Activated T-helper 1 cell treated with anti-CD3 and anti-CD28 coated beads, Interleukin-12 subunit alpha, Interleukin-12 subunit beta, Interleukin-2, Interleukin-4 antibody, amounts not matched to agents 30 ng/mL and 10 ng/mL and 1 ng/mL, durations not matched to agents 14 hours and 24 hours and 36 hours (primary cell): ENCODE measurements at regions of chr16 and their contacts with region 1.

Region 1: GRCh38 chr16:2155091-2156021 is at the start of gene TRAF7:
- DNase-seq: peak; percentile 98
- H3K4me3 Mint-ChIP-seq: peak within 1 kb of the TSS; percentile 99
- H3K27ac Mint-ChIP-seq: peak within 1 kb of the TSS; percentile 93
- H3K4me1 Mint-ChIP-seq: peaks cover 24% of the 10 kb centered on the region
- H3K27me3 Mint-ChIP-seq: no peaks in the 10 kb centered on the region
- total RNA-seq, gene TRAF7: 70.4 and 73.1 TPM in 2 replicates

Region 2: DNA sequence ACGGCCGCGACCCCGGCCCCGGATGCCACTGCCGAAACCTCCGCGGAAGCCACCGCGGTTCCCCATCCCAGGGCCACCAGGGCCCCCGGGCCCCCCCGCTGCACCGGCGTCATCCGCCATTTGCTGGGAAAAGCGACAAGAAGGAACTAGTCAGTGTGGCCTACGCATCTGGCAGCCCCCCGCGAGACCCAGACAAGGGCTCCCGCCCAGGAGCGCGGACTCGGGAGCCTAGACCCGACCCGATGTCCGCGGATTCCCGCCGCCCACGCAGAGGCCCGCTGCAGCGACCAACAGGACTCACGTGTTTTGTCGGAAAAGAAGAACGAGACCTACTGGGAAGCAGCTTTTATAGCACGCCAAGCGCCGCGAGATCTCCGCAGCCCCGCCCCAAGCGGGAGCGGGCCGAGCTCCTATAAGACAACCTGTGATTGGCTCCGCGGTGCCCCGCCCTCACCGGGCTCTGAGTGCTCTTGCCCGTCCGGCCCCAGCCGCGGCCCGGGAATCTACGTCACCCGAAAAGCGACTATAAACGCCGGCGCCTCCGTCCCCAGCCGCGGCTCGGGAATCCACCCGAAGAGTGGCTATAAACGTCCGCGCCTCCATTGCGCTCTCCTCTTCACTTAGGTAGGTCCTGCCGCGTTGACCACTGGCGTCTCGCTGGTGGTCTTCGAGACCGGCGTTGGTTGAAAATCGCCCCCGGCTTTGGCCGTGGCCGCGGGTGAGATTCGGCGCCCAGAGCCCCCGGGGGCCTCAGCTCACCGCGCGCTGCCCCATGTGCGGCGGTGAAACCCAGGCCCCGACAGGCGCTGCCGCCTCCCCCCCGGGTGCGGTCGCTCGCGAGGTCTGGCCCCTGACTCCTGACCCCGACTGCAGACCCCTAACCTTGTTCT is 190.6 kb before region 1 on chr16 and contains the start of gene RPS2:
- intact Hi-C with region 1: loop called (anchors 1 kb)
- DNase-seq: peak; percentile 99
- H3K4me3 Mint-ChIP-seq: peak within 1 kb of the TSS; percentile 100
- H3K27ac Mint-ChIP-seq: peak within 1 kb of the TSS; percentile 97
- H3K4me1 Mint-ChIP-seq: peaks cover 34% of the 10 kb centered on the region
- H3K27me3 Mint-ChIP-seq: no peaks in the 10 kb centered on the region
- total RNA-seq, gene RPS2: 3,144 and 3,145 TPM in 2 replicates

Region 3: GRCh38 chr16:2023098-2023925 is 132.0 kb before region 1 on chr16:
- intact Hi-C with region 1: loop called (anchors 1 kb)
- DNase-seq: peak; percentile 92
- H3K4me3 Mint-ChIP-seq: peak overlapping the region; percentile 77
- H3K27ac Mint-ChIP-seq: no peak overlapping the region
- H3K4me1 Mint-ChIP-seq: peaks cover 16% of the 10 kb centered on the region
- H3K27me3 Mint-ChIP-seq: peaks cover 37% of the 10 kb centered on the region

Region 4: DNA sequence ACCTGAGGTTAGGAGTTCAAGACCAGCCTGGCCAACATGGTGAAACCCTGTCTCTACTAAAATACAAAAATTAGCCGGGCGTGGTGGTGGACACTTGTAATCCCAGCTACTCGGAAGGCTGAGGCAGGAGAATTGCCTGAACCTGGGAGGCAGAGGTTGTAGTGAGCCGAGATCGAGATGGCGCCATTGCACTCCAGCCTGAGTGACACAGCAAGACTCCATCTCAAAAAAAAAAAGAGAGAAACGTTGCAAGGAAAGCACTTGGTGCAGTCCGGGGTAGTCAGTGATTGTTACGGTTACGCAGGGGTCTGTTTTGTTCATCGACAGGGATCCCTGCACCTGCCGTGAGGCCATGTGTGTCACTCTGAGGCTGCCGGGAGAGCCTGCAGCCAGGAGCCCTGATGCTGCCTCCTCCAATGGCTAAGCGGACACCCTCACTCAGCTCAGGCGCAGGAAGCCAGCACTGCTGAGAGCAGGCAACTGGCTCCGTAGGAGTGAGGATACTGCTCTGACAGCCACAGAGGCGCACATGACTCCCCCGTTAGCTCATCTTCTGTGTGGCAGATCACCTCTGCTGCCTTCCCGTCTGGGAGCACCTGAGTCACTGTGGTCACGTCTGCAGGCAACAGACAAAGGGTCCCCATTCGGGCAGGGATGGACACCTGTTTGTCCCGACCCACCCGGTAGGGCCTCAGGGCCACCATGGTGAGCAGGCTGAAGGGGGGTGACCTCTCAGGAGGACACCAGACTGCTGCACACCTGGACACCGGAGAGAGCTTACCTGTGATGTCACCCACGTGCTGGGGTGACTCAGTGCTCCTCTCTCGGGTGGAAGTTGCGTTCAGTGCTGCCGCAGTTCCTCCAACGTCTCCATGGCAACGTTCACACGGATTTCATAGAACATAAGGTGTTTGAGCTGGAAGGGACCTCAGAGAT is 12.1 kb before region 1 on chr16:
- intact Hi-C with region 1: loop called (anchors 1 kb)
- DNase-seq: no peak
- H3K4me3 Mint-ChIP-seq: no peak overlapping the region
- H3K27ac Mint-ChIP-seq: no peak overlapping the region
- H3K4me1 Mint-ChIP-seq: peaks cover 10% of the 10 kb centered on the region
- H3K27me3 Mint-ChIP-seq: peaks cover 15% of the 10 kb centered on the region

Region 5: GRCh38 chr16:2166757-2167638 is 11.6 kb after region 1 on chr16:
- intact Hi-C with region 1: no loop called
- DNase-seq: no peak
- H3K4me3 Mint-ChIP-seq: no peak overlapping the region
- H3K27ac Mint-ChIP-seq: peak overlapping the region; percentile 23
- H3K4me1 Mint-ChIP-seq: no peaks in the 10 kb centered on the region
- H3K27me3 Mint-ChIP-seq: no peaks in the 10 kb centered on the region

Region 6: GRCh38 chr16:2178321-2179106 is 23.2 kb after region 1 on chr16:
- intact Hi-C with region 1: no loop called
- DNase-seq: no peak
- H3K4me3 Mint-ChIP-seq: no peak overlapping the region
- H3K27ac Mint-ChIP-seq: no peak overlapping the region
- H3K4me1 Mint-ChIP-seq: no peaks in the 10 kb centered on the region
- H3K27me3 Mint-ChIP-seq: no peaks in the 10 kb centered on the region

Region 7: DNA sequence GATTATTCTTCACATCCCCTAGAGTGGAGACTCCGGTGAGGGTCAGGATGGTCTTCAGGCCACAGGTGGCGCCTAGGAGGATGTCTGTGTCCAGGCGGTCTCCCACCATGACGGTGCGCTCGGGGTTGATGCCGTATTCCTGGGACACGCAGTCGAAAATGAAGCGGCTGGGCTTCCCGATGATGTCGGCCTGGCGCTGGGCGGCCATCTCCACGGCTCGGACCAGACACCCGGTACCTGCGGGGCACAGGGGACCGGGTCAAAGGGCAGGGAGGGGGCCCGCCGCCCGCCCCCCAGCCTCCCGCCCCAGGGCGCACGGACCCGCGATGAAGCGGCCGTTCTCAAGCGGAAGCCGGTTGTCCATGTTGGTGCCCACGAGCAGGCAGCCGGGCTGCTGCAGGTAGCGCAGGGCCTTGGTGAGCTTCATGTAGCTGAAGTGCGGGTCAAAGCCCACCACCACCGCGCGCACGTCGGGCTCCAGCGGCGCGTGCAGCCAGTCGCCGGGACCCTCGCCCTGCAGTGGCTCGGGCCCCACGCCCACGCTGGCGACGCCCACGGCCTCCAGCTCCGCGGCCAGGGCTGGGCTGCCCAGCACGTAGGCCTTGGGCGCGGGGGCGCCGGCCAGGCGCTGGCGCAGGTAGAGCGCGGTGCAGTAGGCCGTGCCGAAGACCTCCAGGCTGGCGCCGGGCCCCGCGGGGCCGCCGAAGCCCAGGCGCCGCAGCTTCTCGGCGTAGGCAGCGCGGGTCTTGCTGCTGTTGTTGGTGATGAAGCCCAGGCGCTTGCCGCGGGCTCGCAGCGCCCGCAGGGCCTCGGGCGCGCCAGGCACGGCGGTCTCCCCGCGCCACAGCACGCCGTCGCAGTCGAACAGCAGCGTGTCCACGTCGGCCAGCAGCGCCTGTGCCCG is 58.7 kb after region 1 on chr16:
- intact Hi-C with region 1: loop called (anchors 1 kb)
- DNase-seq: no peak
- H3K4me3 Mint-ChIP-seq: peak overlapping the region; percentile 87
- H3K27ac Mint-ChIP-seq: peak overlapping the region; percentile 65
- H3K4me1 Mint-ChIP-seq: peaks cover 18% of the 10 kb centered on the region
- H3K27me3 Mint-ChIP-seq: no peaks in the 10 kb centered on the region

Region 8: GRCh38 chr16:2251483-2252240 is 96.3 kb after region 1 on chr16 and contains the start of gene ECI1:
- intact Hi-C with region 1: loop called (anchors 1 kb)
- DNase-seq: peak; percentile 80
- H3K4me3 Mint-ChIP-seq: peak within 1 kb of the TSS; percentile 91
- H3K27ac Mint-ChIP-seq: peak within 1 kb of the TSS; percentile 94
- H3K4me1 Mint-ChIP-seq: peaks cover 10% of the 10 kb centered on the region
- H3K27me3 Mint-ChIP-seq: no peaks in the 10 kb centered on the region
- total RNA-seq, gene ECI1: 35.5 and 36.5 TPM in 2 replicates

Region 9: GRCh38 chr16:2429034-2429770 is 273.8 kb after region 1 on chr16 and contains the start of gene CCNF:
- intact Hi-C with region 1: loop called (anchors 1 kb)
- DNase-seq: peak; percentile 95
- H3K4me3 Mint-ChIP-seq: peak within 1 kb of the TSS; percentile 99
- H3K27ac Mint-ChIP-seq: peak within 1 kb of the TSS; percentile 88
- H3K4me1 Mint-ChIP-seq: peaks cover 27% of the 10 kb centered on the region
- H3K27me3 Mint-ChIP-seq: no peaks in the 10 kb centered on the region
- total RNA-seq, gene CCNF: 45.3 and 46.7 TPM in 2 replicates

Region 10: DNA sequence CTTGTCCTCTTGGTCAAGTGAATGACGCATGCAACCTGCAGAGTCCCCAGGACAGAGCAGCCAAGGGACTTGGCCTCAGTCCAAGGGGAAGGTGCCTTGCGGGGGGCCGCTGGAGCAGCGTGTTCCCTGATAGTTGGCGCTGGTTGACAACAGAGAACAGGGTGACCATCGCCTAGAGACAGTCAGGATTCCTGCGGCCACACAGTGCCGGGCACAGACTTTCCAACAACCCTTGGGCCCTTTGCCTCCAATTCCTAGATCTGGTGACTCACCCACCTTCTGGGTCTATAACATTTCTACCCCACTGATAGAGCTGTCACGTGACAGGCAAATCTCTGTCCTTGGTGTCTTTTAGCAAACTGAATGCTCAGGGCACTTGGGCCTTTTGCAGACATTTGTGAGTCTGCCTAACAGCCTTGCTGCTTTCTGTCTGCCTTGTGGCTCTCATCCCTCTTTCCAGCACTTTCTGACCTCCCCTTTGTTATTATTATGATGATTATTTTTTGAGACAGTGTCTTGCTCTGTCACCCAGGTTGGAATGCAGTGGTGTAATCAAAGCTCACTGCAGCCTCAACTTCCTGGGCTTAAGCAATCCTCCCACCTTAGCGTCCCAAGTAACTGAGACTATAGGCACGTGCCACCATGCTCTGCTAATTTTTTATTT is 292.7 kb after region 1 on chr16:
- intact Hi-C with region 1: no loop called
- DNase-seq: no peak
- H3K4me3 Mint-ChIP-seq: no peak overlapping the region
- H3K27ac Mint-ChIP-seq: no peak overlapping the region
- H3K4me1 Mint-ChIP-seq: no peaks in the 10 kb centered on the region
- H3K27me3 Mint-ChIP-seq: no peaks in the 10 kb centered on the region